Lower leg skin (tissue), 4 donors: ENCODE measurements at regions of chr1 and their contacts with region 1.

Region 1: GRCh38 chr1:151739590-151740375 is 18.5 kb downstream of the RIIAD1 start:
- DNase-seq: peak; percentile 64 to 86
- H3K4me3 ChIP-seq: no peak overlapping the region
- CTCF ChIP-seq: no peak
- POLR2A ChIP-seq: no peak

Region 2: DNA sequence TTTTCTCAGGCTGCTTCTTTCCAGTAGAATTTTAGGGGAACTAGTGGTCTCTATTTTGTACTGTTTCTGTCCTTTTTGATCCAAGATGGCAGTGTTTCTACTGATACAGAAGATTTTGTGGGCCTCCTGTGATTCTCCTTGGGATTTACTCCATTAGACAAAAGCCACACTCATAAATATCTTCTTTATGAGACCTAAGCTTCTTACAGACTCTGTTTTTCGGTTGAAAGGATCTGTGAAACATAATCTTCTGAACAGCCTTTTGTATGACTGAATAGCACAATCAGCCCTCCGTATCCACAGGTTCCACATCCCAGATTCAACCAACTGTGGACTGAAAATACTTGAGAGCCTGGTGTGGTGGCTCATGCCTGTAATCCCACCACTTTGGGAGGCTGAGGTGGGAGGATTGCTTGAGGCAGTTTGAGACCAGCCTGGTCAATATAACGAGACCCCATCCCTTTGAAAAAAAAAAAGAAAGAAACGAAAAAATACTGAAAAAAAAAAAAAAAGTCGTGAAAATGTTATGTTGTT is 496.0 kb before region 1 on chr1:
- intact Hi-C with region 1: no loop called
- DNase-seq: no peak
- H3K4me3 ChIP-seq: no peak overlapping the region
- CTCF ChIP-seq: no peak
- POLR2A ChIP-seq: no peak

Region 3: GRCh38 chr1:151443846-151444782 is 295.7 kb before region 1 on chr1:
- intact Hi-C with region 1: loop called (anchors 10 kb)
- DNase-seq: peak in 1 of 2 donors; percentile 74
- H3K4me3 ChIP-seq: no peak overlapping the region
- CTCF ChIP-seq: peak in 1 of 3 donors; percentile 25
- POLR2A ChIP-seq: no peak

Region 4: GRCh38 chr1:151594143-151594625 is 145.6 kb before region 1 on chr1:
- intact Hi-C with region 1: loop called (anchors 10 kb)
- DNase-seq: peak; percentile 66 to 94
- H3K4me3 ChIP-seq: no peak overlapping the region
- CTCF ChIP-seq: peak in 1 of 3 donors; percentile 68
- POLR2A ChIP-seq: no peak